ENCODE measurements at regions of chr9 and their contacts with region 1.

Region 1: GRCh38 chr9:35882263-35882848 is 12.2 kb upstream of the OR13J1 start:
- DNase-seq: peak; percentile 20
- ATAC-seq: peak; percentile 83
- H3K4me3 ChIP-seq: no peak overlapping the region
- H3K27ac ChIP-seq: no peak overlapping the region
- H3K4me1 ChIP-seq: no peaks in the 10 kb centered on the region
- H3K27me3 ChIP-seq: no peaks in the 10 kb centered on the region
- CTCF ChIP-seq: peak; percentile 93 to 96 (median 93)
- EP300 ChIP-seq: no peak
- POLR2A ChIP-seq: no peak
- RAD21 ChIP-seq: peak; percentile 97

Region 2: DNA sequence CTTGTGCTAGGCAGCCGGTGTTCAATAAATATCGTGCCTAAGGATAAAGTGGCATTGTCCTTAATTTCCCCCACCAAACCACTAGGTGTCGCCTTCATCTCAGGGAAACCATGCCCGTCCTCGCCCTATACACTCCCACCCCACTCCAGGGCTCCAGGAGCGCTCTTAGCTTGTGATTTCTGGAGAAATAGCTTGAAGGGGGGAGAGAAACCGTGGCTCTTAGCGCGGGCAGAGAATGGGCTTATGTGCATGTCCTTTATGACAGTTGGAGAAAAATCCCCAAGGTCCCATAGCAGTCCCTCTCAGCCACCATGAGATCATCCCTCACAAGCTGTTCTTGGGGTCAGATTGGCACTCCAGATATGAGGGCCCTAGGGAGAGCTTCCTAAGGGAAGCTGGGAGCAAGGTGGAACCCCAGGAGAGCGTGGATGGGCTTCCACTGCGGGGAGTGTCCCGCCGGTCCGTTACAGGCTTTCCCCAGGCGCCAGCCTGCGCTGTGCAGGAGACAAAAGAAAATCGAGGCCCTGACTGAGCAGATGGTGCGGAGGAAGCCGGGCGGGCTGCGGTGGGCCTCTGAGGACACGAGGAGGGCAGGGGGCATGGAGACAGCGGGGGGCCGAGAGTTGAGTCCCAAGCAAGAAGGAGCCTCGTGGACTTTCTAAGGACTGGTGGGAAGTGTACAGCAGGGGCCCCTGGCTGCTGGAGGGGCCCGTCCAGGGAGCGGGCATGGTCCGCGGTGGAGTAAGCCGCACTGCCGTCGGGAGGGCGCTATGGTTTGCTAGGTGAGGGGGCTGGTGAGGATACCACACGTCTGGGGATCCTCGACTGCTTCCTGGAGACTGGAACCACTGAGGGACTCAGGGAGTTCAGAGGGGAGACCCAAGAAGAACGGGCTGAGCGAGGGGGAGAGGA is 91.7 kb before region 1 on chr9:
- CTCF ChIA-PET with region 1: interaction called, 68 read pairs
- POLR2A ChIA-PET with region 1: no interaction called
- RAD21 ChIA-PET with region 1: interaction called, 19 read pairs
- SMC1A ChIA-PET with region 1: interaction called, 19 read pairs
- in situ Hi-C with region 1: loop called (anchors 5 kb)
- intact Hi-C with region 1: loop called (anchors 1 kb)
- DNase-seq: no peak
- ATAC-seq: peak; percentile 98
- H3K4me3 ChIP-seq: no peak overlapping the region
- H3K27ac ChIP-seq: no peak overlapping the region
- H3K4me1 ChIP-seq: no peaks in the 10 kb centered on the region
- H3K27me3 ChIP-seq: no peaks in the 10 kb centered on the region
- CTCF ChIP-seq: peak; percentile 84 to 94 (median 91)
- EP300 ChIP-seq: no peak
- POLR2A ChIP-seq: no peak
- RAD21 ChIP-seq: peak; percentile 83

Region 3: DNA sequence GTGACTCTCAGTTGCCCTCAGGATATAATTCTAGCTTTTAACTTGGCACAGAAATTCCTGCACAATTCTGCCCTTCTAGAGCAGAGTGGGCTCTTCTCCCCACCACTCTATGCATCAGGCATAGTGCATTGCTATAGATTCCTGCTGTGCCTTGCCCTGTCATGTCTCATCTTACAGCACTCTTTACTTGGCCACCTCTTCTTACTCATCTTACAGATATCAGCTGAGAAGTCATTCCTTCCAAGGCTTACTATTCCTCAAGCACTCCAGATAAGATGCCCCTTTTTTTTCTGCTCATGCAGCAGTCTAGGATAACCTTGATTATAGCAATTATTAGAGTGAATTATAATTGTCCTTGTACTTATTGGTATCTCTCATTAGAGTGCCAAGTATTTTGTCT is 59.4 kb before region 1 on chr9:
- CTCF ChIA-PET with region 1: interaction called, 292 read pairs
- POLR2A ChIA-PET with region 1: interaction called, 11 read pairs
- RAD21 ChIA-PET with region 1: interaction called, 138 read pairs
- SMC1A ChIA-PET with region 1: interaction called, 117 read pairs
- in situ Hi-C with region 1: loop called (anchors 5 kb)
- intact Hi-C with region 1: loop called (anchors 1 kb)
- DNase-seq: no peak
- ATAC-seq: no peak
- H3K4me3 ChIP-seq: no peak overlapping the region
- H3K27ac ChIP-seq: no peak overlapping the region
- H3K4me1 ChIP-seq: no peaks in the 10 kb centered on the region
- H3K27me3 ChIP-seq: no peaks in the 10 kb centered on the region
- CTCF ChIP-seq: no peak
- EP300 ChIP-seq: no peak
- POLR2A ChIP-seq: no peak
- RAD21 ChIP-seq: no peak

Region 4: DNA sequence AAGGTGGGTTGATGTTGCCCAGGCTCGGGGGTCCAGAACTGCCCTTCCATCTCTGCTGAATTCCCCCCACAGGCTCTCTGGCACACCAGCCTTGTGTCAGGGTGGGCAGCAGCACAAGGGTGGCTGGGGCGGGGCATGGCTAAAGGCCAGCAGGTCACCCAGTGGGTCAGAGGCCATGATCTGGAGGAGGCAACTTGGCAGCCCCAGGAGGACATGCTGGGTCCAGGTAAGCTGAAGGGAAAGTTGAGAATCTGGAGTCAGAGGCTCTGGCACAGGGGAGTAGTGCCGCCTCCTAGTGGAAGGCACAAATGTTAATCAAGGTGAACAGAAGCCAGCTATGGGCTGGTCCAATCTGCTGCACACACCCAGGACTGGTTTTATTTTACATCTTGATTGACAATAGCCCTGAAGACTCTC is 47.1 kb before region 1 on chr9:
- CTCF ChIA-PET with region 1: interaction called, 59 read pairs
- POLR2A ChIA-PET with region 1: no interaction called
- RAD21 ChIA-PET with region 1: interaction called, 34 read pairs
- SMC1A ChIA-PET with region 1: interaction called, 117 read pairs
- in situ Hi-C with region 1: no loop called
- intact Hi-C with region 1: no loop called
- DNase-seq: no peak
- ATAC-seq: peak; percentile 35; the same call in 2 of the 3 replicates
- H3K4me3 ChIP-seq: no peak overlapping the region
- H3K27ac ChIP-seq: peak overlapping the region; percentile 54; the same call in 1 of the 2 replicates
- H3K4me1 ChIP-seq: peaks cover 29% of the 10 kb centered on the region
- H3K27me3 ChIP-seq: no peaks in the 10 kb centered on the region
- CTCF ChIP-seq: peak; percentile 28 to 35 (median 32); a peak in 5 of 6 replicates
- EP300 ChIP-seq: no peak
- POLR2A ChIP-seq: no peak
- RAD21 ChIP-seq: no peak

Region 5: GRCh38 chr9:35844716-35845270 is 37.6 kb before region 1 on chr9:
- CTCF ChIA-PET with region 1: interaction called, 16 read pairs
- POLR2A ChIA-PET with region 1: no interaction called
- RAD21 ChIA-PET with region 1: interaction called, 12 read pairs
- SMC1A ChIA-PET with region 1: interaction called, 13 read pairs
- in situ Hi-C with region 1: no loop called
- intact Hi-C with region 1: no loop called
- DNase-seq: peak; percentile 64
- ATAC-seq: peak; percentile 48
- H3K4me3 ChIP-seq: no peak overlapping the region
- H3K27ac ChIP-seq: peak overlapping the region; percentile 77
- H3K4me1 ChIP-seq: peaks cover 81% of the 10 kb centered on the region
- H3K27me3 ChIP-seq: no peaks in the 10 kb centered on the region
- CTCF ChIP-seq: no peak
- EP300 ChIP-seq: 0 out of 4 replicates have a peak, but pooled peaks of 1 of the 2 experiments have one; percentile 18
- POLR2A ChIP-seq: no peak
- RAD21 ChIP-seq: no peak

Region 6: GRCh38 chr9:35859310-35859989 is 22.9 kb before region 1 on chr9:
- CTCF ChIA-PET with region 1: interaction called, 19 read pairs
- POLR2A ChIA-PET with region 1: no interaction called
- RAD21 ChIA-PET with region 1: interaction called, 11 read pairs
- SMC1A ChIA-PET with region 1: interaction called, 13 read pairs
- in situ Hi-C with region 1: no loop called
- intact Hi-C with region 1: no loop called
- DNase-seq: no peak
- ATAC-seq: peak; percentile 69
- H3K4me3 ChIP-seq: no peak overlapping the region
- H3K27ac ChIP-seq: no peak overlapping the region
- H3K4me1 ChIP-seq: no peaks in the 10 kb centered on the region
- H3K27me3 ChIP-seq: no peaks in the 10 kb centered on the region
- CTCF ChIP-seq: peak in 1 of 3 experiments; percentile 22; a peak in 2 of 6 replicates
- EP300 ChIP-seq: no peak
- POLR2A ChIP-seq: no peak
- RAD21 ChIP-seq: no peak

Region 7: DNA sequence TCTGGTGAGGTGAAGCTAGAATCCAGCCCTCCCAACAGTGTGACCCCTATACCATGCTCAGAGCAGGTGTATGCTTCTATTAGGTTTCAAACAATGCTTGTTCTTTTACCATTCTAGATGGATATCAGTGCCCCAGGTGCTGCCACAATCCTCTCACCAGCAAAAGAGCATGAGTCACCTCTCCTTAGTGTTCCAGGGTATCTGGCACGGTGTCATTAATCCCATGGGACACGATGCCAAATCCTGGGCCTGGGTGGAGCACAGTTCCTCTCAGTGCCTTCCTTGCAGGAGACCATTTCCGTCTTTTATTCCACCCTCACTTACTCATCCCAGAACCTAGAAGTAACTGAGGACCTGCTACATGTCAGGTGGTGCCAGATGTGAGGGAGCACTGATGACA is 10.9 kb before region 1 on chr9:
- CTCF ChIA-PET with region 1: interaction called, 19 read pairs
- POLR2A ChIA-PET with region 1: no interaction called
- RAD21 ChIA-PET with region 1: no interaction called
- SMC1A ChIA-PET with region 1: interaction called, 3 read pairs
- in situ Hi-C with region 1: no loop called
- intact Hi-C with region 1: no loop called
- DNase-seq: no peak
- ATAC-seq: no peak
- H3K4me3 ChIP-seq: no peak overlapping the region
- H3K27ac ChIP-seq: no peak overlapping the region
- H3K4me1 ChIP-seq: no peaks in the 10 kb centered on the region
- H3K27me3 ChIP-seq: no peaks in the 10 kb centered on the region
- CTCF ChIP-seq: no peak
- EP300 ChIP-seq: no peak
- POLR2A ChIP-seq: no peak
- RAD21 ChIP-seq: no peak

Region 8: DNA sequence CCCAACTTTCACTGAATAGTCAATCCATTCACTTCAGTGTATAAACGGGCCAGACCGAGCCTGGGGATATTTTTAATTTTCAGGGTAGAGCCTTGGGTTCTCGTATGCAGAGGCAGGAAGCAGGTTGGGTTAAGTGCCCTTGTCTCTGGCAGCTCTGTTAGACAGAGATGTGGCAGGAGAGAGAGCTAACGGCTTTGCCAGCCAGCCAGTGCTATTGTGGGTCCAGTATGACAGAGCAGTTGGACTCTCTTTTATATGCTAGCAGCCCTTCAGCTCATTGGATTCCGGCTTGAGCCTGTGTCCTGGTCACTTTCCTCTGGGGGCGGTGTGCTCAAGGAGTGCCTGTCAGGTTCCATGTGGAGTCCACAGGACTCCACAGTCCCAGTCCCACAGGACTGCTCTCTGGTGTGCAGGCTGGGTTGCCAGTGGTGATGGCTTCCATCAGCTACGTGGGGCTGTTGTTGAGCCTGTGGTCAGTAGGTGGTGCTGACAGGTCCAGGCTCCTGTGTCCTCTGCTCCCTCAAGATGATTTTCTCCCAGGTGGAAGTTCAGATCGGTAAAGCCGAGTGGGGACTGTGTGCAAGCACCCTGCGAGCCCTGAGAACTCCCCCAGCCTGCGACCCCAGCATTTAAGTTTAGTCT is 322.7 kb after region 1 on chr9:
- CTCF ChIA-PET with region 1: no interaction called
- POLR2A ChIA-PET with region 1: no interaction called
- RAD21 ChIA-PET with region 1: no interaction called
- SMC1A ChIA-PET with region 1: no interaction called
- in situ Hi-C with region 1: no loop called
- intact Hi-C with region 1: no loop called
- DNase-seq: no peak
- ATAC-seq: peak; percentile 37; the same call in 2 of the 3 replicates
- H3K4me3 ChIP-seq: no peak overlapping the region
- H3K27ac ChIP-seq: no peak overlapping the region
- H3K4me1 ChIP-seq: peaks cover 3% of the 10 kb centered on the region; the same call in 1 of the 2 replicates
- H3K27me3 ChIP-seq: no peaks in the 10 kb centered on the region
- CTCF ChIP-seq: no peak
- EP300 ChIP-seq: no peak
- POLR2A ChIP-seq: no peak
- RAD21 ChIP-seq: no peak

Measured in GM12878 (cell line).